ENCODE measurements at regions of chr12 and their contacts with region 1.

Region 1: GRCh38 chr12:115916910-115917668 is 360.4 kb downstream of the MED13L start:
- DNase-seq: peak; percentile 31
- ATAC-seq: peak; percentile 99
- H3K4me3 ChIP-seq: no peak overlapping the region
- H3K27ac ChIP-seq: no peak overlapping the region
- H3K4me1 ChIP-seq: peaks cover 0 to 8% of the 10 kb centered on the region in 2 experiments; a peak in 1 of 4 replicates
- H3K27me3 ChIP-seq: no peaks in the 10 kb centered on the region
- CTCF ChIP-seq: peak; percentile 84 to 86 (median 85)
- POLR2A ChIP-seq: no peak
- RAD21 ChIP-seq: peak; percentile 98

Region 2: DNA sequence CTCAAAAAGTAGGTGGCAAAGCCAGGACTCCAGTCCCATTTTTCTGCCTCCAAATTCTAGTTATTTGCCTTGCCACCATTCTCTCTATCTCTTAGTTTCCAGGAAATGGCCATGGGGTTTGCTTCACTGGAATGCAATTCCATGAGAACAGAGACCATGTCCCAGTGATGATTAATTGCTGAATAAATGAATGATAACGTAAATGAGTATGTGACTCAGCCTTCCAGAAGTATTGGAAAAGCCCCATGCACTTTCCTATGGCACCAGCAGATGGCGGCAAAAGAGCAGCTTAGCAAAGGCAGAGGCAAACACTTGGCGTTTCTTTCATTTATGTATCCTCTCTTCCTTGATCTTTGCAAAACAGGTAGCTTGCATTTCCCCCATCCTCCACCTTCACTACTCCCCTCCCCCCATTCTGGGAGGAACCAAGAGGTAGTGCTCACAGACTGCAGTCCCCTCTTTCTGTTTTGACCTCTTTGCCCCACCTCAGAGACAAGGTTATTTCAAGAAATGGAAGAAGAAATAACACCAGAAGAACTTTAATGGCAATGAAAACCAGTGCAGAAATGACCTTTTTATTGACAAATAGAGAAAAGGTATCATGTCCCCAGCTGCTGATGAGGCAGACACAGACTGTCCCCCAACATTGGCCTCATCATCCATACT is 1254.4 kb before region 1 on chr12:
- CTCF ChIA-PET with region 1: no interaction called
- POLR2A ChIA-PET with region 1: no interaction called
- RAD21 ChIA-PET with region 1: no interaction called
- intact Hi-C with region 1: loop called (anchors 1 kb)
- DNase-seq: peak; percentile 57
- ATAC-seq: peak; percentile 77
- H3K4me3 ChIP-seq: no peak overlapping the region
- H3K27ac ChIP-seq: no peak overlapping the region
- H3K4me1 ChIP-seq: peaks cover under 1 to 11% of the 10 kb centered on the region in 2 experiments; a peak in 3 of 4 replicates
- H3K27me3 ChIP-seq: no peaks in the 10 kb centered on the region
- CTCF ChIP-seq: peak; percentile 80 to 95 (median 81)
- POLR2A ChIP-seq: no peak
- RAD21 ChIP-seq: peak; percentile 95

Region 3: DNA sequence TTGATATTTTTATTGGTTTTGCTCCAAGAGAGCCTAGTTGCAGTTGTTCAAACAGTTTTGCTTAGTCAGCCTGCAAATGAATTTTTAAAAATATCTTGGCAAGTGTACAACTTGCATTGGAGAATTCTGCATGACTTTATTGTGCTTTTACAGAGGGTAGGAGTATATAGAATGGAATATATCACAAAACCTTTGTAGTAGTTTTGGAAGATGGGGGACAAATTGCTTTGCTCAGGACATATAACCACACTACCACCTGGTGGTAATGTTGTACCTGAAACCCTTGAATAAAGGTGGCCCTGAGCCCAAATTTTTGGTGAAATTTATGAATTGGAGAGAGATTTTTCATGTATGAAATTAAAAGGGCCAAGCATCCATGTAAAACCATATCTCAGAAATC is 284.8 kb before region 1 on chr12:
- CTCF ChIA-PET with region 1: no interaction called
- POLR2A ChIA-PET with region 1: no interaction called
- RAD21 ChIA-PET with region 1: no interaction called
- intact Hi-C with region 1: loop called (anchors 5 kb)
- DNase-seq: no peak
- ATAC-seq: no peak
- H3K4me3 ChIP-seq: no peak overlapping the region
- H3K27ac ChIP-seq: no peak overlapping the region
- H3K4me1 ChIP-seq: no peaks in the 10 kb centered on the region
- H3K27me3 ChIP-seq: no peaks in the 10 kb centered on the region
- CTCF ChIP-seq: peak; percentile 12 to 48 (median 47); a peak in 3 of 6 replicates
- POLR2A ChIP-seq: no peak
- RAD21 ChIP-seq: peak; percentile 70

Region 4: GRCh38 chr12:115794659-115795081 is 122.4 kb before region 1 on chr12:
- CTCF ChIA-PET with region 1: interaction called, 3 read pairs
- POLR2A ChIA-PET with region 1: no interaction called
- RAD21 ChIA-PET with region 1: no interaction called
- intact Hi-C with region 1: loop called (anchors 2 kb)
- DNase-seq: no peak
- ATAC-seq: no peak; the same call in 1 of the 2 replicates
- H3K4me3 ChIP-seq: no peak overlapping the region
- H3K27ac ChIP-seq: no peak overlapping the region
- H3K4me1 ChIP-seq: peaks cover 0 to 9% of the 10 kb centered on the region in 2 experiments; a peak in 1 of 4 replicates
- H3K27me3 ChIP-seq: peaks cover 9% of the 10 kb centered on the region
- CTCF ChIP-seq: no peak
- POLR2A ChIP-seq: no peak
- RAD21 ChIP-seq: peak; percentile 20; the same call in 1 of the 2 replicates

Measured in HCT116 (cell line).